ENCODE measurements at regions of chr1 and their contacts with region 1.

Region 1: GRCh38 chr1:181479137-181479745 is 4.1 kb upstream of the CACNA1E start:
- DNase-seq: peak; percentile 67
- ATAC-seq: peak; percentile 87 to 93
- H3K4me3 ChIP-seq: no peak overlapping the region
- H3K27ac ChIP-seq: no peak overlapping the region
- H3K4me1 ChIP-seq: no peaks in the 10 kb centered on the region
- CTCF ChIP-seq: peak; percentile 83
- EP300 ChIP-seq: no peak
- POLR2A ChIP-seq: no peak
- RAD21 ChIP-seq: peak; percentile 85 to 90

Region 2: DNA sequence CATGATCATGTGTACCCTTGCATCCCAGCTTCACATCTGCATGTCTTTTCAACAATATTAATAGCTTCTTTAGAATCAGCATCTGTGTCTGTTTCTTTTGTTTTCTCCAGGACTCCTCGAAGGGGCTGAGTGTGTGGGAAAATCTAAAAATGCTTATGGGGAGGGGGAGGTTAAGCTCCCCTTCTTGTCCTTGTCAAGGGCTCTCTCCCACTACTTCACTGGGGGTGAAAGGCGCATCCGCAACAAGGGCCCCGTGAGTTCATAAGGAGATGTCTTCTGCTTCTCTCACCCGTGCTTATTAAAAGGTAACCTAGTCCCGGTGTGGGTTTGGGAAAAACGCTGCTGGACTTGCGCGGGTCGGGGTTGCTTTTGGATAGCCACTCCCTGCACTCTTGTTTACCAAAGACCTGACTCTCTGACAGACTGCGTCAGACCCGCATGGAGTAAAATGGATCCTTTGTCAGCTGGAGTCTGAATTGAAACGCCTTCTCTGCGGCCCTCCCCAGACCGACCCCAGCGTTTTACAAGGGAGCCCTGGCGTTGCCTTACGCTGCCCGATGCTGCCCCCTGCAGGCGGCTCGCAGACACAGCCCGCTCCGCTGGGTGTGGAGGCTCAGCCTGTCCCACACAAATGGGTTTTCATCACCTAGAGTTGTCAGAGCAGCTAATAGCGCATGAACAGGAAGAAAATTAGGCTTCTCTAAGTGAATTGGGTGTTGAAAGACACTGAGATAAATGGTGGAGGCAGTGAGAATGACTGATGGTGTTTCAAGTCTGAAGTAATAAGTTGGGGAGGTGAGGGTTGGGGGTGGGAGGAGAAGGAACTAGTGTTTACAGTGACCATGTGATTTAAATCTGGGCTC is 336.9 kb before region 1 on chr1:
- CTCF ChIA-PET with region 1: no interaction called
- POLR2A ChIA-PET with region 1: no interaction called
- DNase-seq: peak; percentile 81 to 92
- ATAC-seq: peak; percentile 89 to 96
- H3K4me3 ChIP-seq: peak overlapping the region; percentile 19
- H3K27ac ChIP-seq: peak overlapping the region; percentile 77 to 92
- H3K4me1 ChIP-seq: peaks cover 36% of the 10 kb centered on the region
- CTCF ChIP-seq: peak; percentile 96
- EP300 ChIP-seq: no peak
- POLR2A ChIP-seq: no peak
- RAD21 ChIP-seq: peak; percentile 100

Region 3: DNA sequence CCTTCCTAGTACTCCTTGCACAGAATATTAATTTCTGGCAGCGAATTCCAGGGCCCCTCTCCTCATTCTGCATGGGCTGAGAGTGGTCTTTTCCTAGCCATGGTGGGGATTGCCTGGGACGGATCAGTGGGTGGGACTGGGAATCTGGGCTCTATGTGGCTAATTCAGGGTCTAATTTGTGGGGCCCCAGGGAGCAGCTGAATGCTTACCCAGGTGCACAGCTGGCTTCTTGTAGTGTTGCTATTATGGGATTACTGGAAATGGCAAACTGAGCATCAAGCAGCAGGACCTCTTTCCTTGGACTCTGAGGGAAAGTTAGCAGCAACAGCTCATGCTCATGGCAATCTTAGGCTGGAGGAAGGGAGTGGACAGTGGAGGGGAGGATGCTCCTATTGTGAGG is 183.1 kb before region 1 on chr1:
- CTCF ChIA-PET with region 1: no interaction called
- POLR2A ChIA-PET with region 1: no interaction called
- DNase-seq: no peak
- ATAC-seq: no peak
- H3K4me3 ChIP-seq: no peak overlapping the region
- H3K27ac ChIP-seq: no peak overlapping the region
- H3K4me1 ChIP-seq: no peaks in the 10 kb centered on the region
- CTCF ChIP-seq: no peak
- EP300 ChIP-seq: no peak
- POLR2A ChIP-seq: no peak
- RAD21 ChIP-seq: no peak

Region 4: DNA sequence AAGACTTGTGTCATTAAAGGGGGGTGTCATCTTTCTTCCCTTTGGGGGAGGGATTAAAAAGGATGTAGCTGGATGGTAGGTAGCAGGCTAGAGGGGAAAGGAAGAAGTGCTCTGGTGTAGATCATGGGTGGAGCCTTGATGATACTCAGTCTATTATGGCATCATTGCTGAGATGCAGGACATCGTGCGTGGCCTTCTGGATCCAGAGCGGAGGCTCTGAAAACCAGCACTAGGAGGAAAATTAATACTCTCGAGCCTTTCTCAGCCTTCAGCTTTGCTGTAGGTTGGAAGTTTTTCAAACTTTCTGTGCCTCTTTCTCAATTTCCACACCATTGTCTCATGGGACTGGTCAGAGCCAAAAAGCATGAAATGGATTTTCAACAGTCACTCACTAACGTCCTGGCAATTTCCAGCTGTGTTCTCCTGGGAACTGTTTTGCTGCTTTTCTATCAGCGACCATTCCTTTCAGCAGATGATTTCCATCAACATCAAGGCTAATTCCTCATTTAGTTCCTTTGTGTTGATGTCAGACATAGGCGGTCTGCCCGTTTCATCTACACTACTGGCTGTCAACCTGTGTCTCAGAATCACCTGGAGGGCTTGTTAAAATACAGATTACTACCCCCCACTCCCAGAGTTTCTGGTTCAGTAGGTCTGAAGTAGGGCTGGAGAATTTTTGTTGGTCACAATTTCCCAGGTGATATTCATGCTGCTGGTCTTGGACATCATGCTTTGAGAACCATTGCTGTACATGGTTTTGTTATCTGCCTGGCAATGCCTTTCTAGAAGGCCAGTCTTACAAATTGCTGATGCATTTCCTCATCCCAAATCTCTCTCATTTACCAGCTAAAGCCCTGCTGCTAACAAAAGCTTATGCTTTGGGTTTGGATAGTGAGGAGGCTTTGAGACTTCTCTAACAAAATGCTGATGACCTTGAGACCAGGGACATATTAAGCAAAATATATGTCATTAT is 11.8 kb after region 1 on chr1:
- CTCF ChIA-PET with region 1: interaction called, 22 read pairs
- POLR2A ChIA-PET with region 1: no interaction called
- DNase-seq: no peak
- ATAC-seq: no peak
- H3K4me3 ChIP-seq: no peak overlapping the region
- H3K27ac ChIP-seq: no peak overlapping the region
- H3K4me1 ChIP-seq: no peaks in the 10 kb centered on the region
- CTCF ChIP-seq: no peak
- EP300 ChIP-seq: no peak
- POLR2A ChIP-seq: no peak
- RAD21 ChIP-seq: no peak

Region 5: GRCh38 chr1:181504399-181504842 is 25.2 kb after region 1 on chr1:
- CTCF ChIA-PET with region 1: interaction called, 12 read pairs
- POLR2A ChIA-PET with region 1: no interaction called
- DNase-seq: peak; percentile 44 to 51
- ATAC-seq: peak; percentile 67 to 91; a peak in 4 of 6 replicates
- H3K4me3 ChIP-seq: no peak overlapping the region
- H3K27ac ChIP-seq: no peak overlapping the region
- H3K4me1 ChIP-seq: no peaks in the 10 kb centered on the region
- CTCF ChIP-seq: no peak
- EP300 ChIP-seq: no peak
- POLR2A ChIP-seq: no peak
- RAD21 ChIP-seq: peak in 1 of 2 experiments; percentile 11; a peak in 1 of 5 replicates

Region 6: GRCh38 chr1:181768211-181768929 is 289.1 kb after region 1 on chr1:
- CTCF ChIA-PET with region 1: no interaction called
- POLR2A ChIA-PET with region 1: no interaction called
- DNase-seq: peak in 1 of 2 experiments; percentile 4
- ATAC-seq: no peak
- H3K4me3 ChIP-seq: no peak overlapping the region
- H3K27ac ChIP-seq: no peak overlapping the region
- H3K4me1 ChIP-seq: no peaks in the 10 kb centered on the region
- CTCF ChIP-seq: no peak
- EP300 ChIP-seq: no peak
- POLR2A ChIP-seq: no peak
- RAD21 ChIP-seq: no peak

Region 7: DNA sequence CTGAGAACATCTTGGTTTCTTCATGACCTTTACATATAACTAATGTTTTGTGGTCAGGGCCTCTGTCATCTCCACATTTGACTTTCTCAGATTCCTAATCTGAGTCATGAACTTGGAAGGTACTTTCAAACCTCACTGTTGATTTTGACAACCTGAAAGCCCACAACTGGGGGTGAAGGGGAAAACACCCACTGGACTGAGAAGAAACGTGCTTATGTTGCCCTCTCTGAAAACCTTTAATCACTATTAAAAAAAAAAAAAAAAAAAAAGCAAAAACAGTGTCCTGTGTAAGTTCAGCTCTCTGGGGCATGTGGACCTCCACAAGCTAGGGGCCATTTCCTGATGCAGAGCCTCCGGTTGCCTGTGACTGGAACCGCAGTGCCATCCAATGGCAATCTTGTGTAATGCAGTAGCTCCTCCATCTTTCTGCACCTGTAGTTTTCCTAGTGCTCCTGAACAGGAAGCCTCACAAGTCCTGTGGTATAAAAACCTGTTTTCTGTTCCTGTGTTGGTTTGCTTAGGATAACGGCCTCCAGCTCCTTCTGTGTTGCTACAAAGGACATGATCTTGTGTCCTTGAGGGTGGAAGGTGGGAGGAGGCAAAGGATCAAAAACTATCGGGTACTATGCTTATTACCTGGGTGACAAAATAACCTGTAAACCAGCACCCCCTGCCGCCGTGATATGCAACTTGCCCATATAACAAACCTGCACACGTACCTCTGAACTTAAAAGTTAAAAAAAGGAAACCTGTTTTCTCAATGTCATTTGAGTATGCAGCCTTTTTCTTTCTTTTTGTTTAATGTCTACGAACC is 457.7 kb after region 1 on chr1:
- CTCF ChIA-PET with region 1: interaction called, 47 read pairs
- POLR2A ChIA-PET with region 1: no interaction called
- DNase-seq: peak; percentile 29 to 64
- ATAC-seq: peak; percentile 83 to 92; a peak in 5 of 6 replicates
- H3K4me3 ChIP-seq: no peak overlapping the region
- H3K27ac ChIP-seq: no peak overlapping the region
- H3K4me1 ChIP-seq: no peaks in the 10 kb centered on the region
- CTCF ChIP-seq: peak; percentile 44
- EP300 ChIP-seq: no peak
- POLR2A ChIP-seq: no peak
- RAD21 ChIP-seq: peak; percentile 43 to 63; a peak in 3 of 5 replicates

Region 8: DNA sequence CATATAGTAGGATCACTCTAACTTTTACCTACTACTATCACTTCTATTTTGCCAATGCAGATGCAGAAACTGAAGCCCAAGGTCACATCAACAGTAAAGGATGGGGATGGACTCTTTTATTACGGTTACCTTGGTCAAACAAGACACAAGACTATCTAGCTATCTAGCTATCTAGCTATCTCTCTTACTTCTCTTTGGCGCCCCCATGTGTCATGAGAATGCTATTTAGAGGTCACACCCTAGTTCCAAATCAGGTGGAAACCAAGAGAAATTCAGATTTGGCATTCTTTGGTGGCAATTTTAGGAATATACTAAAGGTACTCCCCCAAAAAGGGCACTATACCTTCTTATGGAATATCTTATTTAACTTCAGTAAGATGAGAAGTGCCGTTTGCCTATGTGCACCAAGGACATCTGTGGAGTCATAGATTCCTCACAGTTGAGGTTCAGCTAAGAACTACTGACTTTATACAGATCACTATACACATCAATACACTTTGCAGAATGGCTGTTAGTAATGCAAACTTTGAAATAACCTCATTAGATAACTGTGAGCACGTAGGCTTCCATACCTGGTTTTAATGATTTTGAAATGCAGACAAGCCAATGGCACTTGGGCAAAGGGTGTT is 575.6 kb after region 1 on chr1:
- CTCF ChIA-PET with region 1: interaction called, 13 read pairs
- POLR2A ChIA-PET with region 1: no interaction called
- DNase-seq: peak; percentile 17 to 47
- ATAC-seq: peak; percentile 78 to 79; a peak in 5 of 6 replicates
- H3K4me3 ChIP-seq: no peak overlapping the region
- H3K27ac ChIP-seq: no peak overlapping the region
- H3K4me1 ChIP-seq: no peaks in the 10 kb centered on the region
- CTCF ChIP-seq: peak; percentile 52
- EP300 ChIP-seq: no peak
- POLR2A ChIP-seq: no peak
- RAD21 ChIP-seq: peak in 1 of 2 experiments; percentile 57; a peak in 3 of 5 replicates

Region 9: DNA sequence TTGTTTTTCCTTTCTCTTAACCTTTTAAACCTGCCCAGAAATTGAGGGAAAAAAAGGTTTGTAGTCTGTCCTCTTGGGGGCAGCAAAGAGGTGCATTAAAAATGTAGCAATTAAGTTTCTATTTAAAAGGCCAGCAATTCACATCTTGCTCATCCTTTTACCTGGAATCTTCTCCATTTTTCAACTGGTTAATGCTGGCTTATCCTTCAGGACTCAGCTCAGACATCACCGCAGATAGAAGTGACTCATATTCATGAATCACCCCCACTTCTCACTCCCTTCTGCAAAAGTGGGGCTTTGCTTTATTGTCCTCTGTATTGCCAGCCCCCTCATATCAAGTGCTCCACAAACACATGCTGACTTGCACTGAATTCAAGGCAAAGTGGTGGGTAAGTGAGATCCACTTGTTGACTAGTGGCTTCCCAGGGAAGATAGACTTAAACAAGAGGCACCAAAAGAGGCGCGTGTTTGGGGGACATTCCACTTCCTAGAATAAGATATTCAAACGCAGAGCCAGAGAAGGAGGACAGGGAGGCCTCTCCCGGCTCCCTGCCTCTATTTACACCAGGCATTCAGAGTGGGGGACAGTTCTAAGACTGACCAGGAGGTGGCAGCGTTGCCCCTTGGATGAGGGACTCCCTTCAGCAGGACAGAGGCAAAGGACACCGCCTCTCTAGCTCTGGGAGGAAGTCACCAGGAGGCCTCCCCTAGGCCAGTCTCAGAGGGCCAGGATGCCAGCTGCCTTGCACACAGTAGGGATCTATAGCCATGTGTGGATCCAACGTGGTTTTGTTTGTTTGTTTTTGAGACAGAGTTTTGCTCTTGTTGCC is 605.5 kb after region 1 on chr1:
- CTCF ChIA-PET with region 1: interaction called, 15 read pairs
- POLR2A ChIA-PET with region 1: no interaction called
- DNase-seq: peak; percentile 68 to 74
- ATAC-seq: peak; percentile 84 to 95
- H3K4me3 ChIP-seq: no peak overlapping the region
- H3K27ac ChIP-seq: no peak overlapping the region
- H3K4me1 ChIP-seq: 0 out of 3 replicates have a peak, but pooled peaks cover 3% of the 10 kb centered on the region
- CTCF ChIP-seq: peak; percentile 72
- EP300 ChIP-seq: no peak
- POLR2A ChIP-seq: no peak
- RAD21 ChIP-seq: peak; percentile 90 to 94

Region 10: DNA sequence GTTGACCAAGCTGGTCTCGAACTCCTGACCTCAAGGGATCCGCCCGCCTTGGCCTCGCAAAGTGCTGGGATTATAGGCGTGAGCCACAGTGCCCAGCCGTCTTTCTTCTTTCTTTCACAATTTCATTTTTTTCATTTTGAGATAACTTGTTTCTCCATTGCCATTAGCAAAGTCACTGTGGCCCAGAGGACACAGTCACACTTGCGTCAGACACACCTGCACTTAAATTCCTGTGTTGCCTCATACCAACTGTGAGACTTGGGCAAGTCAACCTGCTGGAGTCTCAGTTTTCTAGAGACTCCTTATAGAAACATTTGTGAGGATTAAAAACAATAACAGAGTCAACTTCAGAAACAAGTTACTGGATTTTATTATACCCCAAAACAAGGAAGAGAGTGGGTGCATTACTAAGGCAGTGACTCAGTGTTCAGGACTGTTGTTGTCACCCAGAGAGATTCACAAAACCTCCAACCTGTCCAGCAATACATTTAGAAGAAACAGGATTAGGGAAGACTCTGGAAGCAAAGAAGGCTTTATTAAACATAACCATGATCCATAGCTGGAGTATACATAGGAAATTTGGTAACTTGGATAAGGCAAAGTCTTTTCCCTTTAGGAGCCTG is 918.6 kb after region 1 on chr1:
- CTCF ChIA-PET with region 1: interaction called, 12 read pairs
- POLR2A ChIA-PET with region 1: no interaction called
- DNase-seq: no peak
- ATAC-seq: no peak
- H3K4me3 ChIP-seq: no peak overlapping the region
- H3K27ac ChIP-seq: no peak overlapping the region
- H3K4me1 ChIP-seq: no peaks in the 10 kb centered on the region
- CTCF ChIP-seq: no peak
- EP300 ChIP-seq: no peak
- POLR2A ChIP-seq: no peak
- RAD21 ChIP-seq: no peak

Measured in A549 (cell line).